B cell (primary cell): ENCODE measurements at regions of chr10 and their contacts with region 1.

Region 1: DNA sequence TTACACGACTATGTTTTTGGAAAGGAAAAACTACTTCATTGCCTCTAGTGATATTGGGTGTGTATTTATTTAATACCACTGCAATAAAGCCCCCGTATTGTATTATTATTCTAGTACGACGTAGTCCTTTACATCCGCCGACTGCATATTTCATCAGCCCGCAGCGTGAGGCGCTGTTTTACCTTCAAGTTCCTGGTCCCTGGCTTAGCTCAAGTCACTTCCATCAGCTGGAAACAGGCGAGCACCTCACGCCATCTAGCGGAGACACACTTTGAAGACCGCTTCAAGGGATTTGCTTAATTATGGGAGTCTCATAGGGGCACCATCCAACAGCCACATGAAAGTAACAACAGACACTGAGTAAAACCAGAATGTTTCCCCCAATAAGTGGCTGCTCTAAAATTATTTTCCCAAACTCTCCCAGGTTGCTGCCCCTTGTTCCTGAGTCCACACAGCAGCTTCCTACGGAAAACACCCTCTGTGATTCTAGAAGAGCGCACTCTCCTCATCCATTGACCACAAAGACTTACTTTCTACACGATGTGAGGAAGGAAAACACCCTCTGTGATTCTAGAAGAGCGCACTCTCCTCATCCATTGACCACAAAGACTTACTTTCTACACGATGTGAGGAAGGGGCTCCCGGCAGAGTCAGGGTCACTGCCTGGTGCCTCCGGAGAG is 15.7 kb upstream of the ITIH2 start:
- DNase-seq: peak; percentile 81
- ATAC-seq: peak; percentile 85
- H3K4me3 ChIP-seq: no peak overlapping the region
- H3K4me3 Mint-ChIP-seq: no peak overlapping the region
- H3K27ac ChIP-seq: no peak overlapping the region
- H3K27ac Mint-ChIP-seq: no peak overlapping the region
- H3K4me1 ChIP-seq: no peaks in the 10 kb centered on the region
- H3K4me1 Mint-ChIP-seq: peaks cover 3% of the 10 kb centered on the region
- H3K27me3 ChIP-seq: peaks cover 0 to 7% (median 0%) of the 10 kb centered on the region in 4 experiments
- H3K27me3 Mint-ChIP-seq: peaks cover 10% of the 10 kb centered on the region
- CTCF ChIP-seq: peak; percentile 76

Region 2: GRCh38 chr10:6667679-6668270 is 1019.6 kb before region 1 on chr10:
- CTCF ChIA-PET with region 1: interaction called, 5 read pairs
- POLR2A ChIA-PET with region 1: no interaction called
- intact Hi-C with region 1: loop called (anchors 2 kb)
- DNase-seq: no peak
- ATAC-seq: no peak
- H3K4me3 ChIP-seq: no peak overlapping the region
- H3K4me3 Mint-ChIP-seq: no peak overlapping the region
- H3K27ac ChIP-seq: no peak overlapping the region
- H3K27ac Mint-ChIP-seq: no peak overlapping the region
- H3K4me1 ChIP-seq: no peaks in the 10 kb centered on the region
- H3K4me1 Mint-ChIP-seq: no peaks in the 10 kb centered on the region
- H3K27me3 ChIP-seq: peaks cover 0 to 6% (median 0%) of the 10 kb centered on the region in 4 experiments
- H3K27me3 Mint-ChIP-seq: peaks cover 6% of the 10 kb centered on the region
- CTCF ChIP-seq: no peak

Region 3: GRCh38 chr10:7121154-7121810 is 566.1 kb before region 1 on chr10:
- CTCF ChIA-PET with region 1: interaction called, 18 read pairs
- POLR2A ChIA-PET with region 1: no interaction called
- intact Hi-C with region 1: no loop called
- DNase-seq: peak; percentile 78
- ATAC-seq: peak; percentile 80
- H3K4me3 ChIP-seq: no peak overlapping the region
- H3K4me3 Mint-ChIP-seq: no peak overlapping the region
- H3K27ac ChIP-seq: no peak overlapping the region
- H3K27ac Mint-ChIP-seq: no peak overlapping the region
- H3K4me1 ChIP-seq: peaks cover 4 to 5% of the 10 kb centered on the region in 2 donors
- H3K4me1 Mint-ChIP-seq: peaks cover 5% of the 10 kb centered on the region
- H3K27me3 ChIP-seq: no peaks in the 10 kb centered on the region
- H3K27me3 Mint-ChIP-seq: peaks cover 11% of the 10 kb centered on the region
- CTCF ChIP-seq: peak; percentile 82

Region 4: DNA sequence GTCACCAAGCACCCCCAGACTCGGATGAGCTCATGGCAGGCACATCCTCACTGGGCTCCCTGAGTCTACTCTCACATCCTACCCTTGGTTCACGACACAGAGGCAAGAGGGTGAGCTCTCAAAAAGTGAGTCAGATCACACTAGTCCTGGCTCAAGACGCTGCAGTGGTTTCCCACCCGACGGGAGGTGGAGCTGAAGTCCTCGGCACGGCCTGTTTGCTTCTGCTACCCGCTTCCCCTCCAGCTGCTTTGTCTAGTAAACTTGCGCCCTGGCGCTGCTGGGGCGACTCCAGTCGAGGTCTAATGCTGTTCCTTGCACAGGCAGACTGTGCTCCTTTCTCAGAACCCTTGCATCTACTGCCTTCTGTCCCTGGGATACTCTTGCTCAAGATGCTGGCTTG is 263.1 kb before region 1 on chr10:
- CTCF ChIA-PET with region 1: interaction called, 28 read pairs
- POLR2A ChIA-PET with region 1: no interaction called
- intact Hi-C with region 1: loop called (anchors 1 kb)
- DNase-seq: no peak
- ATAC-seq: peak; percentile 41
- H3K4me3 ChIP-seq: no peak overlapping the region
- H3K4me3 Mint-ChIP-seq: no peak overlapping the region
- H3K27ac ChIP-seq: no peak overlapping the region
- H3K27ac Mint-ChIP-seq: no peak overlapping the region
- H3K4me1 ChIP-seq: no peaks in the 10 kb centered on the region
- H3K4me1 Mint-ChIP-seq: no peaks in the 10 kb centered on the region
- H3K27me3 ChIP-seq: no peaks in the 10 kb centered on the region
- H3K27me3 Mint-ChIP-seq: no peaks in the 10 kb centered on the region
- CTCF ChIP-seq: no peak

Region 5: GRCh38 chr10:7491949-7492659 is 195.3 kb before region 1 on chr10:
- CTCF ChIA-PET with region 1: no interaction called
- POLR2A ChIA-PET with region 1: no interaction called
- intact Hi-C with region 1: no loop called
- DNase-seq: no peak
- ATAC-seq: no peak
- H3K4me3 ChIP-seq: no peak overlapping the region
- H3K4me3 Mint-ChIP-seq: peak overlapping the region; percentile 23
- H3K27ac ChIP-seq: no peak overlapping the region
- H3K27ac Mint-ChIP-seq: no peak overlapping the region
- H3K4me1 ChIP-seq: peaks cover 36 to 46% of the 10 kb centered on the region in 2 donors
- H3K4me1 Mint-ChIP-seq: peaks cover 46% of the 10 kb centered on the region
- H3K27me3 ChIP-seq: no peaks in the 10 kb centered on the region
- H3K27me3 Mint-ChIP-seq: no peaks in the 10 kb centered on the region
- CTCF ChIP-seq: no peak

Region 6: GRCh38 chr10:7525314-7526016 is 161.9 kb before region 1 on chr10:
- CTCF ChIA-PET with region 1: interaction called, 69 read pairs
- POLR2A ChIA-PET with region 1: no interaction called
- intact Hi-C with region 1: no loop called
- DNase-seq: peak; percentile 75
- ATAC-seq: peak; percentile 77
- H3K4me3 ChIP-seq: no peak overlapping the region
- H3K4me3 Mint-ChIP-seq: no peak overlapping the region
- H3K27ac ChIP-seq: no peak overlapping the region
- H3K27ac Mint-ChIP-seq: no peak overlapping the region
- H3K4me1 ChIP-seq: peaks cover 5 to 8% of the 10 kb centered on the region in 2 donors
- H3K4me1 Mint-ChIP-seq: peaks cover 14% of the 10 kb centered on the region
- H3K27me3 ChIP-seq: peaks cover 0 to 1% (median 0%) of the 10 kb centered on the region in 4 experiments
- H3K27me3 Mint-ChIP-seq: peaks cover 16% of the 10 kb centered on the region
- CTCF ChIP-seq: peak; percentile 87

Region 7: DNA sequence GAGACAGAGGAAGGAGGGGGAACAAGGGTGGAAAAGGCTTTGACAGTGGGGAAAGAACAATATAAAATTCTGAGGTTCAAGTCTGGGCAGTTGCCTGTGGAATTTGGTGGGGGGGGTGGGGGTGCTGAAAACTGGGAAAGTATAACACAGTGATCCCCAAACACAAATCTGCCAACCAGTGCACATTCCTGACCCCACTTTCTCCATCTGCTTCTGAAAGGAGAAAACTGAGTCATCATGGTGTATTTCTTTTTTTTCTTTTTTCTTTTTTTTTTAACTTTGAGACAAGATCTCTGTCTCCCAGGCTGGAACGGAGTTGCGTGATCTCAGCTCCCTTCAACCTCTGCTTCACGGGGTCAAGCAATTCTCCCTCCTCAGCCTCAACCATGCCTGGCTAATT is 16.2 kb before region 1 on chr10:
- CTCF ChIA-PET with region 1: interaction called, 24 read pairs
- POLR2A ChIA-PET with region 1: no interaction called
- intact Hi-C with region 1: no loop called
- DNase-seq: no peak
- ATAC-seq: no peak
- H3K4me3 ChIP-seq: no peak overlapping the region
- H3K4me3 Mint-ChIP-seq: no peak overlapping the region
- H3K27ac ChIP-seq: no peak overlapping the region
- H3K27ac Mint-ChIP-seq: no peak overlapping the region
- H3K4me1 ChIP-seq: peaks cover 8 to 10% of the 10 kb centered on the region in 2 donors
- H3K4me1 Mint-ChIP-seq: peaks cover 11% of the 10 kb centered on the region
- H3K27me3 ChIP-seq: peaks cover 0 to 38% (median 16%) of the 10 kb centered on the region in 4 experiments
- H3K27me3 Mint-ChIP-seq: peaks cover 64% of the 10 kb centered on the region
- CTCF ChIP-seq: no peak

Region 8: DNA sequence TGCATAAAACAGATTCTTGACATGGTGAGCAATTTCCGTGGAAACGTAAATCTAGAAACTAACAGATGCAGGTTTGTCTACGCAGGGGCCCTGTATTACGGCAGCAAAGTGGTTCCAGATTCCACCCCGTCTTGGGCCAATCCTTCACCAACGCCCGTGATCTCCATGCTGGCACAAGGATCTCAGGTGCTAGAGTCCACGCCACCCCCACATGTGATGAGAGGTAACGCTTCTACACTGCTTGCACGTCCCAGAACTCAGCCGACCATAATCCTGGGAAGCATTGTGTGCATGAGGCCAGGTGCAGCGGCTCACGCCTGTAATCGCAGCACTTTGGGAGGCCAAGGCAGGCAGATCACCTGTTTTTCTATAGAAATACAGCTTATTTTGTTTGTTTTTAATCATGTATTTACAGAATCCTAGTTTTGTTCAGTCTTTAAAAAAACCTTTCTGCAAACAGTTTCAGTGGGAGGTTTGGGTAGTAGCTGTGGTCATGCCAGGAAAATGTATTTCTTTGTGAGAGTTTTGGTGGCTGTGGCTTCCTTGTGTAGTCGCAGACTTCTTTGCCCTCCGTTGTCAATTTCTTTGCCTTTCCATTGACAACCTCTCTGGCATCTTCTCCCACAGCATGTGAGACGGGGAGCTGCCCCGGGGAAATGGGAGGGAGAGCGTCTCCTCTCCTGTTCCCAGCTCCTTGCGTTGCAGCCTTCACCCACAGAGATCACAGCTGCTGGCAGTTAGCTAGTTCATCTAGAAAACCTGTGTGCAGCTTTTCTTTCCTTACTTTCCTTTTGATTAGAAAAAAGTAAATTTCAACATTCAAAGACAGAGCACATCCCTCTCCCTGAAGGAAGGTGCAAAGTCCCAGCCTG is 51.4 kb after region 1 on chr10:
- CTCF ChIA-PET with region 1: no interaction called
- POLR2A ChIA-PET with region 1: no interaction called
- intact Hi-C with region 1: no loop called
- DNase-seq: no peak
- ATAC-seq: no peak
- H3K4me3 ChIP-seq: no peak overlapping the region
- H3K4me3 Mint-ChIP-seq: no peak overlapping the region
- H3K27ac ChIP-seq: no peak overlapping the region
- H3K27ac Mint-ChIP-seq: no peak overlapping the region
- H3K4me1 ChIP-seq: no peaks in the 10 kb centered on the region
- H3K4me1 Mint-ChIP-seq: no peaks in the 10 kb centered on the region
- H3K27me3 ChIP-seq: peaks cover 0 to 3% (median 0%) of the 10 kb centered on the region in 4 experiments
- H3K27me3 Mint-ChIP-seq: no peaks in the 10 kb centered on the region
- CTCF ChIP-seq: no peak

Region 9: DNA sequence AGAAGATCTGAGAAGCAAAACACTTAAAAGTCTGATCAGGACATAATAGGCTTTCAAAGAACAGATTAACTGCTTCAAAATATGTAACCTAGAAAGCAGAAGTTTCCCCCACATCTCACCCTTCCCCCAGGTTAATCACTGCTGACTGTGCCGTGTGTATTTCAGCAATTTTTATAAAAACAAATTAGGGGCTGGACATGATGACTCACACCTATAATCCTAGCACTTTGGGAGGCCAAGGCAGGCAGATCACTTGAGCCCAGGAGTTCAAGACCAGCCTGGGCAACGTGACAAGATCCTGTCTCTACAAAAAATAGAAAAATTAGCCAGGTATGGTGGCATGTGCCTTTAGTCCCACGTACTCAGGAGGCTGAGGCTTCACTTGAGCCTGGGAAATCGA is 299.5 kb after region 1 on chr10:
- CTCF ChIA-PET with region 1: no interaction called
- POLR2A ChIA-PET with region 1: no interaction called
- intact Hi-C with region 1: no loop called
- DNase-seq: no peak
- ATAC-seq: no peak
- H3K4me3 ChIP-seq: no peak overlapping the region
- H3K4me3 Mint-ChIP-seq: no peak overlapping the region
- H3K27ac ChIP-seq: no peak overlapping the region
- H3K27ac Mint-ChIP-seq: no peak overlapping the region
- H3K4me1 ChIP-seq: no peaks in the 10 kb centered on the region
- H3K4me1 Mint-ChIP-seq: peaks cover 6% of the 10 kb centered on the region
- H3K27me3 ChIP-seq: no peaks in the 10 kb centered on the region
- H3K27me3 Mint-ChIP-seq: no peaks in the 10 kb centered on the region
- CTCF ChIP-seq: no peak